ENCODE measurements at regions of chr19 and their contacts with region 1.

Region 1: GRCh38 chr19:47697863-47698609 is 15.2 kb upstream of the EHD2 start:
- DNase-seq: peak; percentile 74 to 94 (median 87)

Region 2: DNA sequence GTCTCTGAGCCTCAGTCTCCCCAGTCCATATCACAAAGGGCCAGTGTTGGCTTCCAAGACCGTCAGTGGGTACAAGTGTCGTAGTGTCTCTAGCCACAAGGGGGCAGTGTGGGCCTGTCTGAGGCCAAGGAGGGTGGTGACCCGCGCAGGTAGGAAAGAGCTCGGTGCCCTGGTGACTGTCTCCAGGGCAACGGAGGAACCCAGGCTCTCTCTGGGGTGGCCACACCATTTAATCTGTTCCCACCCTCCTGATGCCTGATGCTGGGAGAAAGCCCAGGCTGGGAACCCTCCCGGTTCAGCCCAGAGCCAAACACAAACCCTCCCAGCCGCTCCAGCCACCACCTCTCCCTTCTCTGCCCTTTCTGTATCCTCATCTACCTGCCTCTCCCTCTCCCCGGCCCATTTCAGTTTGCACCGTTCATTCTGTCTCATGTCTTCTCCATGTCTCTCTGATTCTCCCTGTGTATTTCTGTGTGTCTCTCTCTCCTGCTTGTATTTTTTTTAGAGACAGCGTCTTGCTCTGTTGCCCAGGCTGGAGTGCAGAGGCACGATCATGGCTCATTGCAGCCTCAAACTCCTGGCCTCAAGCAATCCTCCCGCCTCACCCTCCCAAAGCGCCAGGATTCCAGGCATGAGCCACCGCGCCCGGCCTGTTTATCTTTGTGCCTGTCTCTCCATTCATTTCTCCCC is 261.2 kb before region 1 on chr19:
- intact Hi-C with region 1: loop called (anchors 2 kb)
- DNase-seq: peak; percentile 73 to 94 (median 86)

Region 3: GRCh38 chr19:47514869-47515588 is 183.0 kb before region 1 on chr19 and contains the start of gene NAPA:
- intact Hi-C with region 1: loop called (anchors 5 kb)
- DNase-seq: peak; percentile 100

Region 4: DNA sequence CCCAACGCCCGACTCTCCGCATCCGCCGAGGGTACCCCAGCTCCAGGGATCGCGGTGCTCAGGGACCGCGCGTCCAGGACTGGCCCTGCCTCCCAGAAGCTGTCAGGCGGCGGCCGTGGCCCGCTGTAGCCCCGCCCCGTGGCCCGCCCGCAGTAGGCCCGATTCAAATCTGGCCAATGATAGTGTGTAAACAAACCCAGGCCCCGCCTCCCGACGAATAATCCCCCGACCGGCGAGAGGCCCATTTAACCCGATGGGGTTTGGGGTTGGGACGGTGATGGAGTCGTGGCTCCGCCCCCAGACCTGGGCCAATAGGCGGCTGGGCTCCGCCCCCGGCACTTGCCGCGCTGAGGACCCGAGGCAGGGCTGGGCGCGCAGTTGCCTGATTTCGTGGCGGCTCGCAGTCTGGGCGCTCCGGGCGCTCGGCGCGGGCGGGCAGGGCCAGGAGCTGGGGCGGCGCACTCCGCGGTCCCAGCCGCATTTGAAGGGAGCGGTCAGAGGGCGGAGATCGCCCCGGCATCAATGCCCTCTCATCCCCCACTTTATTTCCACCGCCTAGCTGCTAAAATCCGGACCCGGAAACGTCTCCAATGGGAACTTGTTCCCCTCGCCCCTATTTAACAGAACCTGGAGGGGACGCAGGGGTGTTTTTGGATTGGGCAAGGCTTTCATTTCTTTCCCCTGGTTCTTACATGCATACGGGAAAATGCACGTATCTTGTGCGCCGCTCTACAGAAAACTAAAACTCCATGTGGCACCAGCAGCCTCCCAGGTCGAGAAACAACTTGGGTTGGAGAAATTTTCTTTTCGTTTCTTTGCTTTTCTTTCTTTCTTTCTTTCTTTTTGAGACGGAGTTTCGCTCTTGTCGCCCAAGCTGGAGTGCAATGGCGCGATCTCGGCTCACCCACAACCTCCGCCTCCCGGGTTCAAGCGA is 97.5 kb before region 1 on chr19:
- intact Hi-C with region 1: loop called (anchors 5 kb)
- DNase-seq: peak; percentile 98 to 100 (median 100)